ENCODE measurements at regions of chr3 and their contacts with region 1.

Region 1: DNA sequence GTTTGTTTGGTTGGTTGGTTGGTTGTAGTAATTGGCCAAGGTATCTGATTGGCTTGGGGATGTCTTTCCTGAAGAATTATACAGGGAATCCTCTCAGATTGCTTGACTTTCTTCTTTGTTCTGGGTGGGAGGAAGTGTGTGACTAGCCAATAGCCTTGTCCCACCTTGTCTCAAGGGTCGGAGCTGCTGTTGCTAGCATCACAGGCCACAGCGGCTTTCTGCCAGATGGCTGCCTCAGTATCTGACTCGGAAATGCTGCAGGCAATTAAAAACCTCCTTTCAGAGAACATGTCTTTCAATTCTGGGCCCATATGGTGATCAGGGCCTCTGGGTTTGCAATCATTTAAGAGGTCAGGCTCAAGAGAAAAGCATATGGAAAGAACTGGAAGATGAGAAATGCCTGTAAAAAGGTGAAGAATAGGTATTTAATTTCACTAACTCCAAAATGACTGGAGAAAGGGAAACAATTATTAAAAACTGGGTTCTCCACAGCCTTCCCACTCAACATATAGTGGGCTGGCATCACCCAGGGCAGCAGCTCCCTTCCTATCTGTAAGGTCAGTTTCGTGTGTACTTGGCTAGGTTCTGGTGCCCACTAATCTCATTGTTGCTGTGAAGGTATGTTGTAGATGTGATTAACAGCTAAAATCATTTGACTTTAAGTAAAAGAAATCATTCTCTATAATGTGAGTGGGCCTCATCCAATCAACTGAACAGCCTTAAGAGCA is 32.4 kb downstream of the TGFBR2 start:
- DNase-seq: no peak
- H3K4me3 Mint-ChIP-seq: no peak overlapping the region
- H3K27ac Mint-ChIP-seq: peak overlapping the region; percentile 83
- H3K4me1 Mint-ChIP-seq: peaks cover 99% of the 10 kb centered on the region
- H3K27me3 Mint-ChIP-seq: no peaks in the 10 kb centered on the region

Region 2: DNA sequence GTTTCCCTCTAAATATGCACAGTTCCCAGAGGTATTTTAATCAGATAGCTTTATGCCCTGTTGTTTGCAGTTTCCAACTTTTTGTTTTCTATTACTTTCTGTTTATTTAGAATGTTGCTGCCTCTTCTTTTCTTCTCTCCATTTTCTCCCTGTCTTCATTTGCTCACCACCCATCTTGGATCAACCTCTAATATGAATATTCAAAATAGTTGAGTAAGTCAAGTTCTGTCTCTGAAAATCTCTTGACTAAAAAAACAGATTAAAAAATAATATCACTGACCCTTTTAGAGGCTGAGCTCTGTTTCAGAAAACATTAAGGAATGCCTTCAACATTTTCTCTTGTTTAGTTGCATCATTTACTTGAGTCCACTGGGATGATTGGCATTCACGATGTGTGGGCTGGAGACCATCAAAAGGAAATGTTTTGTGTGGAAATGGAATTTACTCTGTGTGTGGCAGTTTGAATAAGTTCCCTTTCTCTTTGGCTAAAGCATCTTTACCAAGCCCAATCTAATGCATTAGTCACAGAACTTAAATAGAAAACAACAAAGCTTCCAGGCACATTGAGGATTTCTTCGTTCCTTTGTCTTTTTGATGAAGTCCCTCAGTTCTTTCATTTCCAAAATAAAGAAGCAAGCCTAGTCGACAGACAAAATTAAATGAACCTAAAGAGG is 666.4 kb before region 1 on chr3:
- CTCF ChIA-PET with region 1: no interaction called
- POLR2A ChIA-PET with region 1: no interaction called
- DNase-seq: no peak
- H3K4me3 Mint-ChIP-seq: no peak overlapping the region
- H3K27ac Mint-ChIP-seq: no peak overlapping the region
- H3K4me1 Mint-ChIP-seq: no peaks in the 10 kb centered on the region
- H3K27me3 Mint-ChIP-seq: peaks cover 2% of the 10 kb centered on the region

Region 3: DNA sequence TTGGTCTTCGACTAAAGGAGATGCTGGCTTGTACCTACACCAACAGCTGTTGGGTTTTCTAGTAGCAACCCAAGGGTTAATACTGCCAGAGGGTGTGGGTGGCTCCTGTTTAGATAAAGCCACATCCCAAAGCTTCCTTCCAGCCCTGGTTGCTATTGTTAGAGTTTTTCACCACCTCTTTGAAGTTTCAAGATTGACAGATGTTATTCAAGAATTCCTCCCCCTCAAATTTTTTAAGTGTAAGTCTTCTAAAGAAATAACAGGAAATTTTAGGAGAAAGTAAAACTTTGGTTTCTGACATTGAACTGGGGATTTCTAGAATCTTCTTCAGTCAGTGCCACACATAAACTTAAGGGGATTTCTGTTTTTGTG is 28.4 kb after region 1 on chr3:
- CTCF ChIA-PET with region 1: interaction called, 3 read pairs
- POLR2A ChIA-PET with region 1: interaction called, 13 read pairs
- DNase-seq: peak; percentile 46
- H3K4me3 Mint-ChIP-seq: no peak overlapping the region
- H3K27ac Mint-ChIP-seq: peak overlapping the region; percentile 81
- H3K4me1 Mint-ChIP-seq: peaks cover 85% of the 10 kb centered on the region
- H3K27me3 Mint-ChIP-seq: no peaks in the 10 kb centered on the region